Stomach (tissue), 19 donors: ENCODE measurements at regions of chr5 and their contacts with region 1.

Region 1: GRCh38 chr5:73792687-73793320 is 166.8 kb downstream of the ARHGEF28 start:
- DNase-seq: peak; percentile 78 to 90
- H3K4me3 ChIP-seq: no peak overlapping the region
- H3K27ac ChIP-seq: no peak overlapping the region
- H3K4me1 ChIP-seq: peaks cover 0 to 24% (median 11%) of the 10 kb centered on the region in 4 donors
- H3K27me3 ChIP-seq: no peaks in the 10 kb centered on the region
- CTCF ChIP-seq: peak in 5 of 7 experiments; percentile 83 to 94 (median 92)
- EP300 ChIP-seq: no peak
- POLR2A ChIP-seq: no peak

Region 2: GRCh38 chr5:73587923-73588322 is 204.9 kb before region 1 on chr5:
- intact Hi-C with region 1: loop called (anchors 5 kb)
- DNase-seq: no peak
- H3K4me3 ChIP-seq: no peak overlapping the region
- H3K27ac ChIP-seq: peak overlapping the region in 1 of 5 donors; percentile 22
- H3K4me1 ChIP-seq: peaks cover 0 to 25% (median 9%) of the 10 kb centered on the region in 4 donors
- H3K27me3 ChIP-seq: no peaks in the 10 kb centered on the region
- CTCF ChIP-seq: no peak
- EP300 ChIP-seq: no peak
- POLR2A ChIP-seq: no peak